Activated CD4-positive, alpha-beta memory T cell treated with anti-CD3 and anti-CD28 coated beads for 36 hours (primary cell): ENCODE measurements at regions of chr17 and their contacts with region 1.

Region 1: DNA sequence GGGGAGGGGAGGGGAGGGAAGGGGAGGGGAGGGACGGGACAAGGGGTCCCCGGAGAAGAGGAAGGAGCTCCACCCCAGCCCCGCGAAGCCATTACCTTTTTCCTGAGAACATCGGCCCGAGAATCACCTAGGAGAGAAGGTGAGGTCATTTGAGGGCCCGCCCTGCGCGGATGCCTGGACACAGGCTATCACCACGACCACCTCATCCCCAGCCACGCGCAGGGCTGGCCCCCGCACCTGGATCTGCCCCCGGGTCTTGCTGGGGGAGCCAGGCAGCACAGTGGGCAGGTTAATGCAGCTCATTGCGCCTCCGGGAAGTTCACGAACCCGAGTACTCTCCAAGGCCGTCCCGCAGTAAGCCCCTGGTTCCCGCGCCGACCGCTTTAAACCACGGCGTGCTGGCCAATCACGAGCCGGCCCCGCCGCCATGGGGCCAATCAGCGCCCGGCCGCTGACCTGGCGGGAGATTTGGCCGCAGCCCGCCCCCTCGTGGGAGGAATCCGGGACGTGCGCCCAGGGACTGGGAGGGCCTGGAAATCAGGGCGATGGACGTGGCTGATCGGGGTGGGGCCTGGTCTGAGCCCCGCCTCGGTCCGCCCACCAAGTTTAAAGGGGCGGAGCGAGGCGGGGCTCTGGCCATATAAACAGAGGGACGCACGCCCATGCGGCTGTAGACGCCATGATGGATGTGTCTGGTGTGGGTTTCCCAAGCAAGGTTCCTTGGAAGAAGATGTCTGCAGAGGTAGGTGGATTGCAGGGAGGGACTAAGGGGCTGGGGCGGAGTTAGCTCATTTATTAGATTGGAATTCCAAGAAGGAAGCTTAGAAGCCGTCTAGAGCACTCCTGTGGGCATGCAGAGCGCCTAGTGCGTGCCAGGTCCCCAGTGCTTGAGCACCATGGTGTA is at the starts of genes AFMID and TK1:
- DNase-seq: peak; percentile 98
- H3K4me3 Mint-ChIP-seq: peak within 1 kb of the TSS; percentile 90
- H3K27ac Mint-ChIP-seq: peak within 1 kb of the TSS; percentile 75
- H3K4me1 Mint-ChIP-seq: peaks cover 29% of the 10 kb centered on the region
- H3K27me3 Mint-ChIP-seq: no peaks in the 10 kb centered on the region
- total RNA-seq, gene AFMID: 16.8 to 19.0 TPM
- total RNA-seq, gene TK1: 188 to 193 TPM

Region 2: GRCh38 chr17:78133971-78134898 is 52.7 kb before region 1 on chr17:
- CTCF ChIA-PET with region 1: interaction called, 5 read pairs
- POLR2A ChIA-PET with region 1: interaction called, 3 read pairs
- intact Hi-C with region 1: loop called (anchors 5 kb)
- DNase-seq: peak; percentile 87
- H3K4me3 Mint-ChIP-seq: peak overlapping the region; percentile 65
- H3K27ac Mint-ChIP-seq: peak overlapping the region; percentile 54
- H3K4me1 Mint-ChIP-seq: peaks cover 70% of the 10 kb centered on the region
- H3K27me3 Mint-ChIP-seq: no peaks in the 10 kb centered on the region

Region 3: DNA sequence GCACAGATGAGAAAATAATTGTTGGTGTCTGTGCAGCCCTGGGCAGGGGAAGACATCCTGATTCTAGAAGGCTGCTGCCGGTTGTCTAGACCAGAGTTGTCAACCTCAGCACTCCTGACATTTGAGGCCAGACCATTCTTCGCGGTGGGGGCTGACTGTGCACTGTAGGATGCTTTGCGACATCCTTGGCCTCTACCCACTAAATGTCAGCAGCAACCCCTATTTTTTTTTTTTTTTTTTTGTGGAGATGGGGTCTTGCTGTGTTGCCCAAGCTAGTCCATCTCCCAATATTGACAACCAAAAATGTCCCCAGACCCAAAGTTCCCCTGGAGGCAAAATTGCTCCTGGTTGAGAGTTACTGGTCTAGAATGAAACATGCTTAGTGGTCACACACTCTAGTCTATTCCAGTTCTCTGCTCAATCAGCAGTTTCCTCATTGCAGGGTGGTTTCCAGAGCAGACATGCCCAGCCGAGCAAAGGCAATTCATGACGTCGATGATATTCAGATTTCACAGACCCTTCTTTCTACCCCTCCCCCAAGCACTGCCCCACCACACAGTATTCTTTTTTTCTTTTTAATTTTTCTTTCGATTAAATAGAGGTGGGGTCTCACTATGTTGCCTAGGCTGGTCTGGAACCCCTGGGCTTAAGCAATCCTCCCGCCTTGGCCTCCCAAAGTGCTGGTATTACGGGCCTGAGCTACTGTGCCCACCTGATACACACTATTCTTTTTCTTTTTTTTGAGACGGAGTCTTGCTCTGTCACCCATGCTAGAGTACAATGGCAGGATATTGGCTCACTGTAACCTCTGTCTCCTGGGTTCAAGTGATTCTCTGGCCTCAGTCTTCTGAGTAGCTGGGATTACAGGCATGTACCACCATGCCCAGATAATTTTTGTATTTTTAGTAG is 31.8 kb before region 1 on chr17:
- CTCF ChIA-PET with region 1: no interaction called
- POLR2A ChIA-PET with region 1: no interaction called
- intact Hi-C with region 1: no loop called
- DNase-seq: no peak
- H3K4me3 Mint-ChIP-seq: no peak overlapping the region
- H3K27ac Mint-ChIP-seq: no peak overlapping the region
- H3K4me1 Mint-ChIP-seq: peaks cover 8% of the 10 kb centered on the region
- H3K27me3 Mint-ChIP-seq: no peaks in the 10 kb centered on the region

Region 4: DNA sequence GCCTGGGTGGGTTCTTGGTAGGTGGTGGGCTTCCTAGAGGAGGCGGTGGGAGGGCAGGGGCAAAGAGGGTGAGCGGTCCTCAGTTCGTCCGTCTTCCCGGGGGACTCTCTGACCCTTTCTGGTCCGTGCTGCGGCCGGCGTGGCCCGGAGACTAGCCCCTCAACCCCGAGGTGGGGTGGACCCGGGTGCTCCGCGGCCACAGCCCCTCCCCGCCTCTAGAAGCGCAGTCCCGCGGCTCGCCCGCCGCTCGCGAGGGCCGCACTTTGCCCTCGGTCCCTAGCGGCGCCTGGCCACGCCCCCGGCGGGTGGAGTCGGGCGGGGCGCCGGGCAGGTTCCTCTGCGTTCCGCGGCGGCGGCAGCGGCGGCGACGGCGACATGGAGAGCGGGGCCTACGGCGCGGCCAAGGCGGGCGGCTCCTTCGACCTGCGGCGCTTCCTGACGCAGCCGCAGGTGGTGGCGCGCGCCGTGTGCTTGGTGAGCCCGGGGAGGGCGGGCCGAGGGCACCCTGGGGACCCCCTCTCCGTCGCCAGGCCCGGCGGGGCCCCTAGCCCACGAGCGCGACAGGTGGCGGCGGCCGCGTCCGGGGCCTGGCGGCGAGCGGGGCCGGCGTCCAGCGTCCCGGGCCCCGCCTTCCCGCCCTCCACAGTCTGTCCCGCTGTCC is 18.6 kb before region 1 on chr17 and contains the start of gene SYNGR2:
- CTCF ChIA-PET with region 1: interaction called, 3 read pairs
- POLR2A ChIA-PET with region 1: interaction called, 4 read pairs
- intact Hi-C with region 1: loop called (anchors 2 kb)
- DNase-seq: peak; percentile 89
- H3K4me3 Mint-ChIP-seq: peak within 1 kb of the TSS; percentile 72
- H3K27ac Mint-ChIP-seq: peak within 1 kb of the TSS; percentile 74
- H3K4me1 Mint-ChIP-seq: peaks cover 38% of the 10 kb centered on the region
- H3K27me3 Mint-ChIP-seq: no peaks in the 10 kb centered on the region
- total RNA-seq, gene SYNGR2: 79.2 to 87.7 TPM

Region 5: GRCh38 chr17:78214706-78215061 is 27.7 kb after region 1 on chr17:
- CTCF ChIA-PET with region 1: no interaction called
- POLR2A ChIA-PET with region 1: no interaction called
- intact Hi-C with region 1: loop called (anchors 1 kb)
- DNase-seq: no peak
- H3K4me3 Mint-ChIP-seq: peak overlapping the region; percentile 96
- H3K27ac Mint-ChIP-seq: peak overlapping the region; percentile 78
- H3K4me1 Mint-ChIP-seq: peaks cover 12% of the 10 kb centered on the region
- H3K27me3 Mint-ChIP-seq: no peaks in the 10 kb centered on the region

Region 6: GRCh38 chr17:78497115-78497540 is 310.2 kb after region 1 on chr17:
- CTCF ChIA-PET with region 1: no interaction called
- POLR2A ChIA-PET with region 1: no interaction called
- intact Hi-C with region 1: no loop called
- DNase-seq: peak; percentile 72
- H3K4me3 Mint-ChIP-seq: no peak overlapping the region
- H3K27ac Mint-ChIP-seq: no peak overlapping the region
- H3K4me1 Mint-ChIP-seq: no peaks in the 10 kb centered on the region
- H3K27me3 Mint-ChIP-seq: no peaks in the 10 kb centered on the region